ENCODE measurements at regions of chr5 and their contacts with region 1.

Region 1: DNA sequence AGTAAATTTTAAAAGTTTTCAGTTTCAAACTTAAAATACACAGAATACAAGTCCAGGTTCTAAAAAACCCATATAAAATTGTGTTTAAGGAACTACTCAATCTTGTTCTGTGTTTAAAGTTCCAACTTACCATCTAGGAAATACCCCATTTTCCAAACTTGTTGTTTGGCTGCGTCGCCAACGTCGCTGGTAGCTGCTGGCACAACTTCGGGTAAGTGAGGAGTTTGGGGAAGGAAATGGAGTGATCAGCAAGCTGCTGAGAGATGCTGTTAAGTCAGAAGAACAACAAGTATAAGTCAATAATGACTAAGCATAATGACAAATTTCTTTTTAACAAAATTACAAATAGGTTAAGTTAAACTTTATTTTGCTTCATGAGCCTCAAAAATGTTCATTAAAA is 71.3 kb upstream of the RAPGEF6 start:
- DNase-seq: no peak
- H3K4me3 ChIP-seq: no peak overlapping the region
- H3K27ac ChIP-seq: no peak overlapping the region
- H3K4me1 ChIP-seq: no peaks in the 10 kb centered on the region
- H3K27me3 ChIP-seq: no peaks in the 10 kb centered on the region
- CTCF ChIP-seq: no peak
- POLR2A ChIP-seq: no peak

Region 2: DNA sequence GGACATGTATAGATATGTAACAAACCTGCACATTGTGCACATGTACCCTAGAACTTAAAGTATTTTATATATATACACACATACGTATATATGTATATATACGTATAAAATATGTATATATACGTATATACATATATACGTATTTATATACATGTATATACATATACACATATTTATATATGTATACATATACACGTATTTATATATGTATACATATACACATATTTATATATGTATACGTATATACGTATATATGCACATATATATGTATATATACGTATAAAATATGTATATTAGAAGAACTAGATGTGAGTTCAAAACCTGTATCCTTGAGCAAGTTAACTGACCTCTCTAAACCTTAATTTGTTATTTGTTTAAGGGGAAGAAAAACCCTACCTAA is 29.1 kb after region 1 on chr5:
- intact Hi-C with region 1: loop called (anchors 2 kb)
- DNase-seq: no peak
- H3K4me3 ChIP-seq: no peak overlapping the region
- H3K27ac ChIP-seq: no peak overlapping the region
- H3K4me1 ChIP-seq: no peaks in the 10 kb centered on the region
- H3K27me3 ChIP-seq: no peaks in the 10 kb centered on the region
- CTCF ChIP-seq: no peak
- POLR2A ChIP-seq: no peak

Region 3: DNA sequence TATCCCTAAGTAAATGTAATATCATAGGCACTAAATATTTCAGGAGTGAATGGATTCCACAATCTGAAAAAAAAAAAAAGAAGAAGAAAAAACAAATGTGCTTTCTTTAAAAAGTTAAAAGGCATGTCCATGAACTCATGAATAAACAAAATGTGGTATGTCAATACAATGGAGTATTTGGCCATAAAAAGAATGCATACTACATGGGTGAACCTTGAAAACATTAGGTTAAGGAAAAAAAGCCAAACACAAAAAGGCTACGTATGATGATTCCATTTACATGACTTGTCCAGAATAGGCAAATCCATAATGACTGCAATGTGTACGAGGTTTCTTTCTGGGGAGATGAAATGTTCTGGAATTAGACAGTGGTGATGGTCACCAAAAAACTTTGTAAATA is 45.2 kb after region 1 on chr5:
- intact Hi-C with region 1: loop called (anchors 5 kb)
- DNase-seq: no peak
- H3K4me3 ChIP-seq: no peak overlapping the region
- H3K27ac ChIP-seq: no peak overlapping the region
- H3K4me1 ChIP-seq: no peaks in the 10 kb centered on the region
- H3K27me3 ChIP-seq: no peaks in the 10 kb centered on the region
- CTCF ChIP-seq: no peak
- POLR2A ChIP-seq: no peak